ENCODE measurements at regions of chr7 and their contacts with region 1.

Region 1: GRCh38 chr7:131546583-131547111 is 9.8 kb downstream of the PODXL start:
- DNase-seq: peak; percentile 67
- ATAC-seq: peak; percentile 50
- H3K4me3 Mint-ChIP-seq: no peak overlapping the region
- H3K27ac Mint-ChIP-seq: no peak overlapping the region
- H3K4me1 Mint-ChIP-seq: peaks cover 13% of the 10 kb centered on the region
- H3K27me3 Mint-ChIP-seq: peaks cover 3% of the 10 kb centered on the region

Region 2: GRCh38 chr7:131513245-131514061 is 33.2 kb before region 1 on chr7:
- CTCF ChIA-PET with region 1: interaction called, 10 read pairs
- DNase-seq: peak; percentile 87
- ATAC-seq: peak; percentile 98
- H3K4me3 Mint-ChIP-seq: no peak overlapping the region
- H3K27ac Mint-ChIP-seq: peak overlapping the region; percentile 5
- H3K4me1 Mint-ChIP-seq: peaks cover 24% of the 10 kb centered on the region
- H3K27me3 Mint-ChIP-seq: peaks cover 6% of the 10 kb centered on the region

Region 3: GRCh38 chr7:131557651-131558385 is 11.2 kb after region 1 on chr7:
- CTCF ChIA-PET with region 1: interaction called, 14 read pairs
- DNase-seq: no peak
- ATAC-seq: no peak
- H3K4me3 Mint-ChIP-seq: no peak overlapping the region
- H3K27ac Mint-ChIP-seq: no peak overlapping the region
- H3K4me1 Mint-ChIP-seq: peaks cover 11% of the 10 kb centered on the region
- H3K27me3 Mint-ChIP-seq: peaks cover 63% of the 10 kb centered on the region

Region 4: DNA sequence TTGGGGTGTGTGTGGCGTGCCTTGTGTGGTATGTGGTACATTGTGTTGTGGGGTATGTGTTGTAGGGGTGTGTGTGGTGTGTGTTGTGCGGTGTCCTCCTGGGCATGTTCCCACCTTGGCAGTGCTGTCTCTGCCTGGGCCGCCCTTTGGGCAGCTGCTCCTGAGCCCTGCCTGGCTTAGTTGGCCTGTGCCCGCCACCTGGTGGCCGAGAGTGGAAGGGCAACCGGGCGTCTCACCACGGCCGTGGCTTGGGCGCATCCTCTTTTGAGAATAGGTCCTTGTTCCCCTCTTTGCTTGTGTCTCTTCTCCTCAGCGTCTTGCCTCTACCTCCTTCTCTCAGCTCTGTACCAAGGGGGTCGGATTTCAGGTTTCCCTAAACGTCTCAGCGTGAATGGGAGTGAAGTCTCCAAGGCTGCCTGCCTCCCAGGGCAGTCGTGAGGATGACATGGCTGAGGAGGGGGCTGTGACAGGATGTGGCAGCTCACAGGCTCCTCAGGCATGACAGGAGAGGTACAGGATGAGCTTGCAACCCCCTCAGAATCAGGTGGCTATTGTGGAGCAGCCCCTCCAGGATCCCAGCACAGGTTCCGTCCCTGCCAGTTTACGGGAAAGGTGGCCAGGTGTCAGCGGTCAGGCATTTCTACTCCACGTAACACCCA is 108.2 kb after region 1 on chr7:
- CTCF ChIA-PET with region 1: interaction called, 19 read pairs
- DNase-seq: peak; percentile 89
- ATAC-seq: peak; percentile 96
- H3K4me3 Mint-ChIP-seq: no peak overlapping the region
- H3K27ac Mint-ChIP-seq: no peak overlapping the region
- H3K4me1 Mint-ChIP-seq: no peaks in the 10 kb centered on the region
- H3K27me3 Mint-ChIP-seq: peaks cover 6% of the 10 kb centered on the region